Dendritic cell treated with granulocyte-macrophage colony-stimulating factor and Interleukin-4, amounts not matched to agents 40 ng/mL and 50 ng/mL, for 4 days (primary cell): ENCODE measurements at regions of chr16 and their contacts with region 1.

Region 1: GRCh38 chr16:57734925-57735754 is 430 bp upstream of the KATNB1 start:
- H3K4me3 Mint-ChIP-seq: peak overlapping the region; percentile 99
- H3K27ac Mint-ChIP-seq: peak overlapping the region; percentile 97
- H3K4me1 Mint-ChIP-seq: peaks cover 40% of the 10 kb centered on the region
- H3K27me3 Mint-ChIP-seq: no peaks in the 10 kb centered on the region

Region 2: DNA sequence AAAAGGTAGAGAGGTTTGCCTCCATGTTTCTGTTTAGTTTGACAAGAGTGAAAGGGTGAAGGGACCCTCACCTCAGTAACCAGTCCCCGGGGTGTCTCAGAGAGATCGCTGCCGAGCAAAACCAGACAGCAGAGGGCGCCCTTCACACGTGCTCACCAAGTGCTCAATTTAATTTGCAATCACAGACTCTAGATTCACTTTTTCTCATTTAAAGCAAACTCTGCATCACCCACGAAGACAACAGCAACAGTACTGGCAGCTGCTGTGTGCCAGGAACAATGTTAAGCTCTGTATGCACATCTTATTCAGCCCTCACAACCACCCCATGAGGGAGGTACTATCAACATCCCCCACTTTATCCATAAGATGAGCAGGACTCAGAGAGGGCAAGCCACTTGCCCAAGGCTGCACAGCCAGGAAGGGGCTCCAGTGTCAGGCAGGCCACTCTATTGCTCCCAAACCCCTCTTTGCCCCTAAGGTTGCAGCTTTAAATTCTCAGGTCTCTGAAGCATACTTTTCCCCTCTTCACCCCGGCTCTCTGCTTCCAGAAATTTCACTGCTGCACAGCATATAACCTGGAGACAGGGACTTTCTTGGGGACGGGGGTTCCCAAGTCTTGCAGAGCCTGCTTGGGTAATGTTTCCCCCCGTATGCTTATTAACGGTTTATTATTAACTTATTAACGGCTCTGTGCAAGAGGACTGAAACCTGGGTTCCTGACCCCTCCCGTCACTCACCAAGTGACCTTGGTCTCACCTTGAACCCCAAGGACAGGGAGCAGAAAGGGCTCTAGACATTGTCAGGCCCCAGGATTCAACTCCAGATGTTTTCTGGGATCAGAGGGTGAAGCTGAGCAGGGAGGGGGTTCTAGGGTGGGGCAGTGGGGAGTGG is 164.9 kb after region 1 on chr16:
- intact Hi-C with region 1: loop called (anchors 10 kb)
- H3K4me3 Mint-ChIP-seq: no peak overlapping the region
- H3K27ac Mint-ChIP-seq: no peak overlapping the region
- H3K4me1 Mint-ChIP-seq: peaks cover 40% of the 10 kb centered on the region
- H3K27me3 Mint-ChIP-seq: peaks cover 14% of the 10 kb centered on the region

Region 3: DNA sequence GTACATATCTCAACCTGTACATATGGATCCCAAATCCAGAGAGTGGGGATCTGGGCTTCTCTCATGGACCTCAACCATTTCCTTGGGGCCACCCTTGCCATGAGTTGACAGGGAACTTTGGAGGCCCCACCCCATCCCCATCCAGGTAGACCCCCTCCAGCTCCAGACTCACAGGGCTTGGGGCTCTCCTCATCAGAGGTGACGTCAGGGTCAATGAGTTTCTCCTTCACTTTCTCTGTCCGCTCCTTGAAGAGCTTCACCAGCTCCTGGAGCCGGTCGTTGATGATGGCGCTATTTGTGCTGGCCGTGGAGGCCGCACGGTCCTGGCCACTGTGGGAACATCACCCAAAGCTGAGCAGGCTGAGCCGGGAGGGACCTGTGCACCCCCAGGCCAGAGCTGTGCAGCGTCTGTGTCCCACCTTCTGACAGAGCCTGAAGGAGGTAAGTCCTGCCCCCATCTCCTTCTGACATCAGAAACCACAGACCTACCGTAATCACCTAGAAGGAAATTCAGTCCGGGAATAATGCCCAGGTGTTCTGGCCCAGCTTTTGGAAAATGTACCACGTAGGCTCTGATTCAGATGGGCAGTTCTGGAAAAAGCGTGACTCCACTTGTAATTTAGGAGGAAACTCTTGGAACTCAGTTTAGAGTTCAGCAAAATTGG is 185.2 kb after region 1 on chr16:
- intact Hi-C with region 1: no loop called
- H3K4me3 Mint-ChIP-seq: no peak overlapping the region
- H3K27ac Mint-ChIP-seq: no peak overlapping the region
- H3K4me1 Mint-ChIP-seq: no peaks in the 10 kb centered on the region
- H3K27me3 Mint-ChIP-seq: peaks cover 11% of the 10 kb centered on the region

Region 4: DNA sequence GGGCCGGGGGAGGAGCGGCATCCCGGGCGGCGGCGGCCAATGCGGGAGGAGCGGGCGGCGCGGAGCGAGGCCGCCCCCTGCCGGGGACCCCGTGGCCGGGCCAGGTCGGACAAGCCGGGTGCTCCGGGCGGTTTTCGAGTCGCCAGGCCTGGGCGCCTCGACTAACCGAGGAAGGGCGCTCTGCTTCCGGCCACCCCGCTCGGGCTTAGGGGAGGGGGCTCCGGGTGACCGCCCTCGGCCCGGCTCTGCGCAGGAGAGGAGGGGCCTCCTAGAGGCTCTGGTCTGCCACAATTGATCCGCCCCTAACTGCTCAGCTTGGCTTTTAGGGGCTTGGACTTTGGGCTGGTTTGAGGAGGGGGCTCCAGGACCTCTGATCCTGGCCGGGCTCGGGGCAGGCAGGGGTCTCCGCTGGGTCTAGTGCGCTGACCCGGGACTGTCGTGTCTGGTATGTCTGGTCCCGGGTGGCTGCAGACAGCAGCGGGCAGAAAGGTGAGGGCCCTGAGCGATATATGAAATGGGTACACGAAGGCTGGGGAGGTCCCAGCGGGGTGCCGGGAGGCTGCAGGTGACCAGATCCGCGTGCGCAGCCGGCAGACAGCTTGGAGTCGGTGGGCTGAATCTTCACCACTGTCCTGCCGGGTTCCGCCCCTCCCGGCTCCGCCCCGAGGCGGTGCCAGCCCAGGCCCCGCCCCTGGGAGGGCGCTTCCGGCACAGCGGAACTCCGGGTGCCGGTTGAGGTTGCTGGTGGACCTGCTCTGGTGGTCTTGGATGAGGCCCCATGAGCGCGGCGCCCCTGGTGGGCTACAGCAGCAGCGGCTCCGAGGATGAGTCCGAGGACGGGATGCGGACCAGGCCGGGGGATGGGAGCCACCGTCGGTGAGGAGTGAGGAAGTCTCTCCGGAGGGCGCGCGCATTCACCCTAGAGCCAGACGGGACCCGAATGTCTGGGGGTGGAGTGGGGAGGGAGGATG is 265.9 kb after region 1 on chr16 and contains the start of gene USB1:
- intact Hi-C with region 1: loop called (anchors 5 kb)
- H3K4me3 Mint-ChIP-seq: peak within 1 kb of the TSS; percentile 97
- H3K27ac Mint-ChIP-seq: peak within 1 kb of the TSS; percentile 94
- H3K4me1 Mint-ChIP-seq: peaks cover 68% of the 10 kb centered on the region
- H3K27me3 Mint-ChIP-seq: no peaks in the 10 kb centered on the region

Region 5: DNA sequence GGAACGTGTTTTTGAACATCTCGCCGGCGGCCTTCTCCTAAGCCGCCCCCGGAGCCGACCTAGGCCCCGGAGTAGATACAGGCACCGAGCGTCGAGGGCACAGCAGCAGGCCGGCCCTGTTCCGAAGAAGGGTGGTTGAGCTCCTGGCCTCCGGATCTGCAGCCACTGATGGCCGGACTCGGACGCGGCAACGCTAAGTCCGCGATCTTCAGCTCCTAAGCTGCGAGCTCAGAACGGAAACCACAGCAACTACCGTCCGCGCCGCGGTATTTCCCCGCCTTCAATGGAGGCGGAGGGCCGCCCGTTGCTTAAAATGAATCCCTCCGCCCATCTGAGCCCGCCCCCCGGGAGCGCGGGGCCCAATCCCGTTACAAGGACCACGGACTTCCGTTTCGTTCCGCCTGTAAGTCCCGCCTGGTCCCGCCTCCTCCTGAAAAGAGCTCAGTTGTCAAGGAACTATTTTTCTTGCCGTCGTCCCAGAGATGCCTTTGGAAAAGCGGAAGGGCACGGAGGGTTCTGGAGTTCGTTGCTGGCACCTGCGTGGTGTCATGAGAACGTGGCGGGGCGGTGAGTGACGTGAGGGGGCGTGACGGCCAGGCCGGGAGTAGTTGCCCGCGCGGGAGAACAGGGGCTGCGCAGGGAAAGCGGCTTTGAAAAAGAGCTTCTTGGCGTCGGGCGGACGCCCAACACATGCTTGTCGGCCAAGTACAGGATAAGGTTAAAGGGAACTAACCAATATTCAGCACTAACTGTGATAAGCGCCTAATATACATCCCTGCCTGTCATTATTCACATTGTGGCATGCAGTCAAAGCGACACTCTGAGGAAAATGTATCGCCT is 394.2 kb after region 1 on chr16 and contains the start of gene CFAP20:
- intact Hi-C with region 1: loop called (anchors 10 kb)
- H3K4me3 Mint-ChIP-seq: peak within 1 kb of the TSS; percentile 71
- H3K27ac Mint-ChIP-seq: peak within 1 kb of the TSS; percentile 84
- H3K4me1 Mint-ChIP-seq: peaks cover 21% of the 10 kb centered on the region
- H3K27me3 Mint-ChIP-seq: no peaks in the 10 kb centered on the region